SK-N-SH (cell line): ENCODE measurements at regions of chr19 and their contacts with region 1.

Region 1: GRCh38 chr19:29610563-29611271 is 4.6 kb downstream of the POP4 start:
- DNase-seq: peak; percentile 90
- H3K4me3 ChIP-seq: no peak overlapping the region
- H3K27ac ChIP-seq: no peak overlapping the region
- H3K4me1 ChIP-seq: peaks cover 0 to 5% of the 10 kb centered on the region in 2 experiments; a peak in 2 of 4 replicates
- H3K27me3 ChIP-seq: no peaks in the 10 kb centered on the region
- CTCF ChIP-seq: peak; percentile 87
- EP300 ChIP-seq: no peak
- RAD21 ChIP-seq: peak; percentile 84

Region 2: GRCh38 chr19:29587518-29587986 is 23.2 kb before region 1 on chr19:
- CTCF ChIA-PET with region 1: no interaction called
- POLR2A ChIA-PET with region 1: no interaction called
- DNase-seq: no peak
- H3K4me3 ChIP-seq: no peak overlapping the region
- H3K27ac ChIP-seq: no peak overlapping the region
- H3K4me1 ChIP-seq: no peaks in the 10 kb centered on the region
- H3K27me3 ChIP-seq: peaks cover 18% of the 10 kb centered on the region; the same call in 1 of the 2 replicates
- CTCF ChIP-seq: no peak
- EP300 ChIP-seq: no peak
- RAD21 ChIP-seq: no peak

Region 3: GRCh38 chr19:29622138-29623070 is 11.7 kb after region 1 on chr19:
- CTCF ChIA-PET with region 1: interaction called, 25 read pairs
- POLR2A ChIA-PET with region 1: interaction called, 3 read pairs
- DNase-seq: peak; percentile 59
- H3K4me3 ChIP-seq: no peak overlapping the region
- H3K27ac ChIP-seq: no peak overlapping the region
- H3K4me1 ChIP-seq: no peaks in the 10 kb centered on the region
- H3K27me3 ChIP-seq: no peaks in the 10 kb centered on the region; the same call in 1 of the 2 replicates
- CTCF ChIP-seq: no peak
- EP300 ChIP-seq: no peak
- RAD21 ChIP-seq: no peak

Region 4: GRCh38 chr19:29628675-29629410 is 18.1 kb after region 1 on chr19:
- CTCF ChIA-PET with region 1: interaction called, 23 read pairs
- POLR2A ChIA-PET with region 1: no interaction called
- DNase-seq: peak; percentile 3
- H3K4me3 ChIP-seq: no peak overlapping the region
- H3K27ac ChIP-seq: no peak overlapping the region
- H3K4me1 ChIP-seq: no peaks in the 10 kb centered on the region
- H3K27me3 ChIP-seq: no peaks in the 10 kb centered on the region; the same call in 1 of the 2 replicates
- CTCF ChIP-seq: no peak
- EP300 ChIP-seq: no peak
- RAD21 ChIP-seq: no peak

Region 5: GRCh38 chr19:29665215-29665825 is 54.6 kb after region 1 on chr19 and contains the start of gene PLEKHF1:
- CTCF ChIA-PET with region 1: interaction called, 14 read pairs
- POLR2A ChIA-PET with region 1: interaction called, 5 read pairs
- DNase-seq: peak; percentile 98
- H3K4me3 ChIP-seq: peak within 1 kb of the TSS; percentile 74 to 82
- H3K27ac ChIP-seq: peak within 1 kb of the TSS in 1 of 2 experiments; percentile 26; a peak in 1 of 4 replicates
- H3K4me1 ChIP-seq: peaks cover 14 to 27% of the 10 kb centered on the region in 2 experiments; a peak in 3 of 4 replicates
- H3K27me3 ChIP-seq: no peaks in the 10 kb centered on the region
- CTCF ChIP-seq: no peak
- EP300 ChIP-seq: no peak
- RAD21 ChIP-seq: peak; percentile 7; the same call in 1 of the 2 replicates
- polyA plus RNA-seq, gene PLEKHF1: 3.9 TPM in 2 replicates

Region 6: GRCh38 chr19:29731331-29731850 is 120.7 kb after region 1 on chr19:
- CTCF ChIA-PET with region 1: interaction called, 10 read pairs
- POLR2A ChIA-PET with region 1: no interaction called
- DNase-seq: no peak
- H3K4me3 ChIP-seq: no peak overlapping the region
- H3K27ac ChIP-seq: no peak overlapping the region
- H3K4me1 ChIP-seq: no peaks in the 10 kb centered on the region
- H3K27me3 ChIP-seq: no peaks in the 10 kb centered on the region; the same call in 1 of the 2 replicates
- CTCF ChIP-seq: no peak
- EP300 ChIP-seq: no peak
- RAD21 ChIP-seq: no peak